ENCODE measurements at regions of chr1 and their contacts with region 1.

Region 1: GRCh38 chr1:227954163-227954850 is 6.6 kb upstream of the WNT9A start:
- DNase-seq: no peak
- ATAC-seq: no peak
- H3K4me3 ChIP-seq: no peak overlapping the region
- H3K27ac ChIP-seq: no peak overlapping the region
- H3K4me1 ChIP-seq: peaks cover 11% of the 10 kb centered on the region
- H3K27me3 ChIP-seq: no peaks in the 10 kb centered on the region
- CTCF ChIP-seq: 0 out of 2 replicates have a peak, but pooled peaks have one; percentile 3

Region 2: DNA sequence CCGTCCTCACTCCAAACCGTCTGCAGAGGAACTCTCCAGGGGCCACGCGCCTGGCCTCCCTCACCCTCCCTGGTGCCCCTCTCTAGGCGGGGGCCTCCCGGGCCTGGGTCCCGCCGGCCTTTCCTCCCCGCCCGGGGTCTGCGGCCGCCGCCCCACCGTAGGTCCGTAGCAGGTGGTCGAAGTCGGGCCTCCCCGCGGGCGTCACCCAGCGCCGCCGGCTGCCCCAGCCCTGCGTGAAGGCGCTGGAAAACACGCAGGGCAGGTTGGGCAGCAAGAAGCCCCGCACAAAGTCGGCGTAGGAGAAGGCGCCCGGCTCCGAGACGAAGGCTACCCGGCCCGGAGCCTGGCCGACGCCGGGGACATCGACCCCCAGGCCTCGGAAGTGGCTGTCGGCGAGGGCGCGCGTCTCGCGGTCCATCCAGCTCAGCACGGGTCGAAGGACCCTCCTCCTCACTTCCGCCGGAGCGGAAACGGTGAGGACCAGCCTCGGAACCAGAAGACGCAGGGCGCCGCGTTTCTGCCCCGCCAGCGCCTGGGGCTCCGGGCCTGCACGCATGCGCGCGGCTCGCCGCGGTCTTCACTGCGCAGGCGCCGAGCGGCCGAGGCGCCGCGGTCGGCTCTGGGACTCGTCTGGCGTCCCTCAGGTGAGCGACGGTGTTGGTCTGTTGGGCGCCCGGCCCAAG is 219.3 kb before region 1 on chr1 and contains the starts of genes JMJD4 and SNAP47:
- CTCF ChIA-PET with region 1: no interaction called
- POLR2A ChIA-PET with region 1: no interaction called
- intact Hi-C with region 1: no loop called
- DNase-seq: peak; percentile 99
- ATAC-seq: peak; percentile 89
- H3K4me3 ChIP-seq: peak within 1 kb of the TSS; percentile 80
- H3K27ac ChIP-seq: peak within 1 kb of the TSS; percentile 22
- H3K4me1 ChIP-seq: peaks cover 22% of the 10 kb centered on the region
- H3K27me3 ChIP-seq: no peaks in the 10 kb centered on the region
- CTCF ChIP-seq: no peak
- total RNA-seq, gene JMJD4: 80.5 and 87.8 TPM in 2 replicates
- total RNA-seq, gene SNAP47: 123 and 145 TPM in 2 replicates

Region 3: GRCh38 chr1:227793948-227794816 is 160.1 kb before region 1 on chr1:
- CTCF ChIA-PET with region 1: interaction called, 11 read pairs
- POLR2A ChIA-PET with region 1: no interaction called
- intact Hi-C with region 1: no loop called
- DNase-seq: no peak
- ATAC-seq: peak; percentile 6; the same call in 1 of the 2 replicates
- H3K4me3 ChIP-seq: no peak overlapping the region
- H3K27ac ChIP-seq: no peak overlapping the region
- H3K4me1 ChIP-seq: peaks cover 4% of the 10 kb centered on the region
- H3K27me3 ChIP-seq: no peaks in the 10 kb centered on the region
- CTCF ChIP-seq: no peak

Measured in PC-3 (cell line).